ENCODE measurements at regions of chrX and their contacts with region 1.

Region 1: DNA sequence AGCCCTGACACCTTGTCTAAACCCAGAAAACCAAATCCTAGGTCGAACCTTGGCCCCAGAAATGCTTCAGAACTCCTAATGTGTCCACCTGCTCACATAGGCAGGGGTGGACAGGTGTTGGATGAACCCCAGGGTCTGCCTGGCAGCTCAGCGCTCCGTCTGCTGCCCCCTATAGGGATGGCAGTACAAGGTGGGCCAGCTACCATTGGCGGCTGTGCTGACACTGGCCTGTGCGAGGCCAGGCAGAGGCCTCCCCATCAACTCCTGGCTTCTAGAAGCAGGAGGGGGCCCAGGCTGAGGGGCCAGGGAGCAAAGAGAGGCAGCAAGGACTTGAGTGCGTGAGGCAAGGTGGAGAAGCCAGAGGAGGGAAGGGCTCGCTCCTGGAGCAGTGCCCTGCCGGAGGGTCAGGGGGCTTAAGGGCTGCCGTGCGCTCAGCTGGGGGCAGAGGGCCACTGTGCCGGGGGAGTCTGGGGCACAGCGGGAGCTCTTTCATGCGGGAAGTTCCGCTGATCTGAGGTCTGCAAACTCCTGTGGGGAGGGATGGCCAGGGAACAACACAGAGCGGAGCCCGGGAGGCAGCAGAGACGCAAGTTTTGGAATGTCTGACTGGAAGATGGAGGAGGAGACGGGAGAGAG is 20.6 kb downstream of the CCNQ start:
- DNase-seq: no peak
- ATAC-seq: peak in 1 of 2 experiments; percentile 38; a peak in 2 of 6 replicates
- H3K4me3 ChIP-seq: no peak overlapping the region
- H3K27ac ChIP-seq: no peak overlapping the region
- H3K4me1 ChIP-seq: no peaks in the 10 kb centered on the region
- CTCF ChIP-seq: no peak
- EP300 ChIP-seq: no peak
- POLR2A ChIP-seq: no peak
- RAD21 ChIP-seq: no peak

Region 2: GRCh38 chrX:153564051-153564736 is 14.1 kb before region 1 on chrX:
- CTCF ChIA-PET with region 1: interaction called, 10 read pairs
- POLR2A ChIA-PET with region 1: no interaction called
- DNase-seq: no peak
- ATAC-seq: no peak
- H3K4me3 ChIP-seq: no peak overlapping the region
- H3K27ac ChIP-seq: no peak overlapping the region
- H3K4me1 ChIP-seq: no peaks in the 10 kb centered on the region
- CTCF ChIP-seq: no peak
- EP300 ChIP-seq: no peak
- POLR2A ChIP-seq: no peak
- RAD21 ChIP-seq: no peak

Region 3: DNA sequence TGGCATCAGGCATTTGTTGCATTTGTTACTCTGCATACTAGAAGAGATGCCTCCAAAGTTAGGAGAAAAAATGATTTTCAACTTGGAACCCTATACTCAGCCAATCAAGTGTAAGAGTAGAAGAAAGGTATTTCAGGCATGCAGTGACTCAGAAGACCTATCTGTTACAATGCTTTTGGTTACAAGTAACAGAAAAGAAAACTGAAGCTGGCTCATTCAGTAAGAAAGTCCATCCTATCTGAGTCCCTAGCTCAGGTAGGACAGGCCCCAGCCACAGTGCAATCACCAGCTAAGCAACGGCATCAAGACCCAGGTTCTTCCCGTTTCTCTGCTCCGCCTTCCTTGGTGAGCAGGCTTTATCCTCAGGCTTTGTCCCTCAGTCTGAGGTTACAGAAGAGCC is 495.9 kb after region 1 on chrX:
- CTCF ChIA-PET with region 1: no interaction called
- POLR2A ChIA-PET with region 1: no interaction called
- DNase-seq: peak; percentile 28 to 48
- ATAC-seq: peak; percentile 91 to 94
- H3K4me3 ChIP-seq: no peak overlapping the region
- H3K27ac ChIP-seq: peak overlapping the region; percentile 41 to 79; a peak in 5 of 6 replicates
- H3K4me1 ChIP-seq: peaks cover 21% of the 10 kb centered on the region
- CTCF ChIP-seq: no peak
- EP300 ChIP-seq: no peak
- POLR2A ChIP-seq: no peak
- RAD21 ChIP-seq: no peak